H1 (cell line): ENCODE measurements at regions of chr9 and their contacts with region 1.

Region 1: DNA sequence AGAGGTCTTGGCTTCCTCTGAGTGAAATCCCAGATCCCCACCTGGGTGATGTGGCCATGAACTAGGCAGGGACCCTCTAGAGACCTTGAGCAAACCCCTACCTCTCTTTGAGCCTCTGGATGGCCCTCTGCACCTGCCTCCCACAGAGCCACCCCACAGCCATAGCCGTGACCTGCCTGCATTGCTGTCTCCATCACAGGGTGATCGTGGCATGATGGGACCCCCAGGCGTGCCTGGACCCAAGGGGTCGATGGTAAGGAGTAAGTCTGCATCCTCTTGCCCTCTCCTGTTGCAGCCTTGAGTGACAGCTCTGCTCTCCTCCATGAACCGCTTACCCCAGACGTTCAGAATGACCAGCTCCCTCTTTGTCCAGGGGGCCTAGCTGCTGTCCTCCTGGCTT is 70.5 kb upstream of the ORM1 start:
- DNase-seq: no peak
- H3K4me3 ChIP-seq: no peak overlapping the region
- H3K27ac ChIP-seq: no peak overlapping the region
- H3K4me1 ChIP-seq: no peaks in the 10 kb centered on the region
- H3K27me3 ChIP-seq: no peaks in the 10 kb centered on the region
- CTCF ChIP-seq: no peak
- EP300 ChIP-seq: no peak
- POLR2A ChIP-seq: no peak
- RAD21 ChIP-seq: no peak

Region 2: DNA sequence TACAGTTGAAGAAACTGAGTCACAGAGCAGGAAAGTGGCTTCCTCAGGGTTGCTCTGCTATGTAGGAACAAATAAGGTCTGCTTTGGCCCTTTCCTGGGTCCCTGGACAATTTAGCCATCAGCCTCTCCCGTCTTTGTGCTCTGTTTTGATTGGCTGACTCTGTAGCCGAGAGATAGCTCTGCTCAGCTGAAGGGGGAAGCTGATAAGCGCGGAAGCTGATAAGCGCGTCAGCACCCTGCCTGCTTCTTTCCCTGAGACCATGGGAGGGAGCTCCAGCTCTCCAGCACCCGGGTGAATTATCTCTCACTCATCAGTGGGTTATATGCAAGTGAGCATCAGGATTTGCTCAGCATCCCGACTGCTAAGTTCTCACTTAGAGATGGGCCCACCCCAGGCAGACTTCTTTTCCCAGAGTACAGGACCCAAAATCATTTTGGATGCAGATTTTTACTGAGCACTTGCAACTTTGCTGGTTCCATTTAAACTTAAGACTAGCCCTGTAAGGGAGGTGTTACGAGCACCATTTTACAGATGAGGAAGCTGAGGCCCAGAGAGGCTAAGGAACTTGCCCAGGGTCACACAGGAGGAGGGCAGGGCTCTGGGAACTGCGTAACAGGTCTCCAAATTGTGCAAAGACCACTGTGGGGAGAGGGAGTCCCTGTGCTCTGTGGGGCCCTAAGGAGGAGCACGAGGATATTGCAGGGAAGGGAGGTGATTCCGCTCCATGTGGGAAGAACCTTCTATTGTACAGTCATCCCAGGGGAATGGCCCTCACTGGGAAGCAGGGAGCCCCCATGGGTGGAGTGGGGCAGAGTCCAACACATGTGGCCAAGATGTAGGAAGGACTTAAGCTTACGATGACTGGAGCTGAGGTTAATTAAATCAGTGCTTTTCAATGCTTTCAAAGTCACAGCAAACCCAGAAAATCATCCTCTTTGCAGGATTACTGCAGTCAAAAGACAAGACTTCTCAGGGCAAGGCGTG is 13.2 kb before region 1 on chr9:
- CTCF ChIA-PET with region 1: interaction called, 10 read pairs
- POLR2A ChIA-PET with region 1: no interaction called
- DNase-seq: no peak
- H3K4me3 ChIP-seq: no peak overlapping the region
- H3K27ac ChIP-seq: no peak overlapping the region
- H3K4me1 ChIP-seq: peaks cover 0 to 4% (median 0%) of the 10 kb centered on the region in 4 experiments; a peak in 2 of 7 replicates
- H3K27me3 ChIP-seq: no peaks in the 10 kb centered on the region; a peak in 2 of 7 replicates
- CTCF ChIP-seq: peak in 2 of 3 experiments; percentile 40 to 52; a peak in 3 of 4 replicates
- EP300 ChIP-seq: no peak
- POLR2A ChIP-seq: no peak
- RAD21 ChIP-seq: peak; percentile 52 to 57